IMR-90 (cell line): ENCODE measurements at regions of chr5 and their contacts with region 1.

Region 1: DNA sequence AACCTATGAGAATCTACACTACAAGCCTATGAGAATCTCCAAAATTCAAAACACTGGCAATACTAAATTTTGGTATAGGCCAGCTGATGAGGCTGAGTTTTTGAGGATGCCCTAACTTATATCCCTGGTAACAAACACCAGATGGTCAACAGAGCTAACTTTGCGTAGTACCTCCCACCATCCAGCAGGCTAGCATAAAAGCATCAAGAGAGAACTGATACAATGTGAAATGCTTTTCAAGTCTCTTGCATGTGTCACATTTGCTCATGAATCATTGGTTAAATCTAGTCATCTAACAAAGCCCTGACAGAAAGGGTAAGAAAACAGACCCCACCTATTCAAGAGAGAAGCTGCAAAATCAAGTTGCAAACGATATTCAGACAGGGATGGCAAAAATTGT is 1609.7 kb upstream of the CDH9 start:
- DNase-seq: no peak
- ATAC-seq: no peak
- H3K4me3 ChIP-seq: no peak overlapping the region
- H3K27ac ChIP-seq: no peak overlapping the region
- H3K4me1 ChIP-seq: no peaks in the 10 kb centered on the region
- H3K27me3 ChIP-seq: no peaks in the 10 kb centered on the region
- CTCF ChIP-seq: no peak
- POLR2A ChIP-seq: no peak
- RAD21 ChIP-seq: no peak

Region 2: GRCh38 chr5:28632607-28633006 is 15.5 kb before region 1 on chr5:
- CTCF ChIA-PET with region 1: no interaction called
- POLR2A ChIA-PET with region 1: no interaction called
- dilution Hi-C with region 1: no loop called
- in situ Hi-C with region 1: no loop called
- intact Hi-C with region 1: loop called (anchors 1 kb)
- DNase-seq: no peak
- ATAC-seq: no peak
- H3K4me3 ChIP-seq: no peak overlapping the region
- H3K27ac ChIP-seq: no peak overlapping the region
- H3K4me1 ChIP-seq: no peaks in the 10 kb centered on the region
- H3K27me3 ChIP-seq: no peaks in the 10 kb centered on the region
- CTCF ChIP-seq: no peak
- POLR2A ChIP-seq: no peak
- RAD21 ChIP-seq: no peak